ENCODE measurements at regions of chr4 and their contacts with region 1.

Region 1: GRCh38 chr4:182917182-182918043 is at the start of gene DCTD:
- DNase-seq: peak; percentile 92
- ATAC-seq: peak; percentile 80
- H3K4me3 ChIP-seq: peak within 1 kb of the TSS; percentile 33 to 96 (median 93)
- H3K4me3 Mint-ChIP-seq: peak within 1 kb of the TSS; percentile 93
- H3K27ac ChIP-seq: peak within 1 kb of the TSS; percentile 99
- H3K27ac Mint-ChIP-seq: peak within 1 kb of the TSS; percentile 95
- H3K4me1 ChIP-seq: peaks cover 24% of the 10 kb centered on the region in 2 donors
- H3K4me1 Mint-ChIP-seq: peaks cover 33% of the 10 kb centered on the region
- H3K27me3 ChIP-seq: peaks cover 0 to 5% (median 1%) of the 10 kb centered on the region in 4 experiments
- H3K27me3 Mint-ChIP-seq: peaks cover 8% of the 10 kb centered on the region
- CTCF ChIP-seq: peak; percentile 64
- total RNA-seq, gene DCTD: 66.0 and 75.8 TPM in 2 replicates

Region 2: GRCh38 chr4:182938205-182938645 is 20.8 kb after region 1 on chr4:
- CTCF ChIA-PET with region 1: interaction called, 10 read pairs
- POLR2A ChIA-PET with region 1: no interaction called
- intact Hi-C with region 1: no loop called
- DNase-seq: peak; percentile 65
- ATAC-seq: peak; percentile 92
- H3K4me3 ChIP-seq: no peak overlapping the region
- H3K4me3 Mint-ChIP-seq: no peak overlapping the region
- H3K27ac ChIP-seq: no peak overlapping the region
- H3K27ac Mint-ChIP-seq: no peak overlapping the region
- H3K4me1 ChIP-seq: no peaks in the 10 kb centered on the region
- H3K4me1 Mint-ChIP-seq: peaks cover 3% of the 10 kb centered on the region
- H3K27me3 ChIP-seq: peaks cover 0 to 4% (median 0%) of the 10 kb centered on the region in 4 experiments
- H3K27me3 Mint-ChIP-seq: peaks cover 20% of the 10 kb centered on the region
- CTCF ChIP-seq: peak; percentile 93

Region 3: DNA sequence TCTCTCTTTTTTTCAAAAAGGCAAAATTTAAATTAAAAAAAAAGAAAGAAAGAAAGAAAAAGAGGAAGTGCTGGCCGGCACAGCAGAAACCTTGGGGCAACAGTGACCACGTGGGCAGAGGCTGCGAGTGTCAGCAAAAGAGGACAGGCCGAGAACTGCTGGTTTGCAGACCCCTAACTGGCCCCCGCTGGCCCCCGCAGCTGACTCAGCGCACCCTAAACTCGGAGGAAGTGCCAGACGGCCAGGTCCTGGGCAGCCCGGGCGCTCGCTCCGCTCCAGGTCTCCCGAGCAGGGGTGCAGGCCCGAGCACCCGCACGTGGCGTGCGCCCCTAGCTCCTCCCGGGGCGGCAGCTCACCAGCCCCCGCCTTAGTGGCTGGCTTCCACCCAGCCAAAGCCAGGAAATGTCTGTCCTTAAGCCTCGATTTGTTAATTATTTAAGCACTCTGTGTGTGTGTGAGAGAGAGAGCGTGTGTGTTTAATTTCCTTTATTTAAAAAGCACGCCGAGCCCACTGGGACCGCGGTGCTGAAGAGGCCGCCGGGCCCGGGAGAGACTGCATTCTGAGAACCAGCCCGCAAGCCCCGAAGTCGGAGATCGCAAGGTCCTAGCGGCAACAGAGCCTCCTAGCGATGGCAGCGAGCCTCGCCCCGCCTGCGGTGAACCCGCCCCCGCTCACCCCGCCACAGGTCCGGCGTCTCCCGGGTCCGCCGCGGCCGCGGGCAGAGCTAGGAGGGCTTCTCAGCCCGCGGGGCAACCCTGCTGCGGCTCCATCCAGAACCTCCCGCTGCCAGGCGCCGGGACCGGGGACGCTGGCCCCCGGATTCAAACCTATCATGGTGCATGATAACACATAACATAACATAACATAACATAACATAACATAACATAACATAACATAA is 481.1 kb after region 1 on chr4:
- CTCF ChIA-PET with region 1: no interaction called
- POLR2A ChIA-PET with region 1: no interaction called
- intact Hi-C with region 1: loop called (anchors 5 kb)
- DNase-seq: peak; percentile 74
- ATAC-seq: peak; percentile 84
- H3K4me3 ChIP-seq: peak overlapping the region; percentile 32 to 76 (median 65)
- H3K4me3 Mint-ChIP-seq: peak overlapping the region; percentile 87
- H3K27ac ChIP-seq: peak overlapping the region in 1 of 2 donors; percentile 56
- H3K27ac Mint-ChIP-seq: peak overlapping the region; percentile 50
- H3K4me1 ChIP-seq: peaks cover 12 to 23% of the 10 kb centered on the region in 2 donors
- H3K4me1 Mint-ChIP-seq: peaks cover 24% of the 10 kb centered on the region
- H3K27me3 ChIP-seq: peaks cover 0 to 9% (median 2%) of the 10 kb centered on the region in 4 experiments
- H3K27me3 Mint-ChIP-seq: peaks cover 13% of the 10 kb centered on the region
- CTCF ChIP-seq: no peak

Region 4: GRCh38 chr4:183407128-183407585 is 489.7 kb after region 1 on chr4:
- CTCF ChIA-PET with region 1: interaction called, 3 read pairs
- POLR2A ChIA-PET with region 1: interaction called, 10 read pairs
- intact Hi-C with region 1: no loop called
- DNase-seq: peak; percentile 89
- ATAC-seq: peak; percentile 99
- H3K4me3 ChIP-seq: peak overlapping the region in 4 of 5 experiments; percentile 58 to 74 (median 62)
- H3K4me3 Mint-ChIP-seq: peak overlapping the region; percentile 80
- H3K27ac ChIP-seq: peak overlapping the region; percentile 53 to 68
- H3K27ac Mint-ChIP-seq: peak overlapping the region; percentile 70
- H3K4me1 ChIP-seq: peaks cover 5 to 10% of the 10 kb centered on the region in 2 donors
- H3K4me1 Mint-ChIP-seq: peaks cover 17% of the 10 kb centered on the region
- H3K27me3 ChIP-seq: no peaks in the 10 kb centered on the region
- H3K27me3 Mint-ChIP-seq: no peaks in the 10 kb centered on the region
- CTCF ChIP-seq: peak; percentile 87

Region 5: GRCh38 chr4:183444214-183445066 is 527.0 kb after region 1 on chr4 and contains the start of gene CDKN2AIP:
- CTCF ChIA-PET with region 1: no interaction called
- POLR2A ChIA-PET with region 1: no interaction called
- intact Hi-C with region 1: loop called (anchors 1 kb)
- DNase-seq: peak; percentile 98
- ATAC-seq: peak; percentile 85
- H3K4me3 ChIP-seq: peak within 1 kb of the TSS; percentile 79 to 93 (median 82)
- H3K4me3 Mint-ChIP-seq: peak within 1 kb of the TSS; percentile 98
- H3K27ac ChIP-seq: peak within 1 kb of the TSS; percentile 78 to 95
- H3K27ac Mint-ChIP-seq: peak within 1 kb of the TSS; percentile 99
- H3K4me1 ChIP-seq: peaks cover 14 to 22% of the 10 kb centered on the region in 2 donors
- H3K4me1 Mint-ChIP-seq: peaks cover 33% of the 10 kb centered on the region
- H3K27me3 ChIP-seq: no peaks in the 10 kb centered on the region
- H3K27me3 Mint-ChIP-seq: no peaks in the 10 kb centered on the region
- CTCF ChIP-seq: peak; percentile 5
- total RNA-seq, gene CDKN2AIP: 36.0 and 42.6 TPM in 2 replicates

Region 6: DNA sequence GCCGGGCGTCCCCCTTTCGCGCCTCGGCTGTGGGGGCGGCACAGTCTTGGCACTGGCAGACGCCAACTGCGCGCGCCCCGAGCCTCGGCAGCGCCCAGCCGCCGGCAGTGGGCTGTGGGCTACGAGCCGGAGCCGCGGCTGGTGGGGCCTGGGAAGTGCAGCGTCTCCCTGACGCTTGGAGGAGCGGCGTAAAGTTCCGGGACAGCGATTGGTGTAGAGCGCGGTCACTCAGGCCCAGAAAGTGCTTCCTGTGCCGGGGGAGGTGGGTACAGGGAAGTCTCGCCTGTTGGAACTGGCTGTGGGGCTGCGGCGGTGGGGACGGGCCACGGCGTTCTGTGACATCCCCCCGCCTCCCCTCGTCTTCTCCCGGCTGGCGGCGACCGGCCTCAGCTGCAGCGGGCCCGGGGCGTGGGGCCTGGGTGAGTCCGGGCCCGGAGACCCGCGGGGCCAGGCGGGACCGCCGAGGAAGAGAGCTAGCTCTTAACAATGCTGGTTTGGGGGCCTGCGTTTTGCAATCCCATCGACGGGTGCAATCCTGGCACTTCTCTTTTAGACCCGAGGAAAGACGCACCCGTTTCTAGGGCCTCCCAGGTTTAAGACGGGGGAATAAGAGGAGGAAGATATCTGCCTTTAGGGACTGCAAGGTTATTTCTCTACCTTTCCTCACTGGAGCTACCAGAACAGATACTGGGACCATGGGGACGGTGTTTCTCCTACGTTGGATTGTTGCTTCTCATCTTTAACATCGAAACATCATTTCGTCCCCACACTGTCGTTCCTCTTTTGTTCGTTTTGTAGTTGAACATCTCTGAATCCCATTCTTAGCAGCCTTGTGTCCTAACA is 741.8 kb after region 1 on chr4 and contains the starts of genes RWDD4 and TRAPPC11:
- CTCF ChIA-PET with region 1: interaction called, 3 read pairs
- POLR2A ChIA-PET with region 1: no interaction called
- intact Hi-C with region 1: loop called (anchors 5 kb)
- DNase-seq: peak; percentile 97
- ATAC-seq: peak; percentile 98
- H3K4me3 ChIP-seq: peak within 1 kb of the TSS; percentile 62 to 91 (median 87)
- H3K4me3 Mint-ChIP-seq: peak within 1 kb of the TSS; percentile 93
- H3K27ac ChIP-seq: peak within 1 kb of the TSS; percentile 70 to 90
- H3K27ac Mint-ChIP-seq: peak within 1 kb of the TSS; percentile 93
- H3K4me1 ChIP-seq: peaks cover 17 to 24% of the 10 kb centered on the region in 2 donors
- H3K4me1 Mint-ChIP-seq: peaks cover 26% of the 10 kb centered on the region
- H3K27me3 ChIP-seq: no peaks in the 10 kb centered on the region
- H3K27me3 Mint-ChIP-seq: no peaks in the 10 kb centered on the region
- CTCF ChIP-seq: no peak
- total RNA-seq, gene RWDD4: 15.7 and 16.3 TPM in 2 replicates
- total RNA-seq, gene TRAPPC11: 53.8 and 56.6 TPM in 2 replicates

Measured in B cell (primary cell).